Activated T-helper 1 cell treated with anti-CD3 and anti-CD28 coated beads, Interleukin-12 subunit alpha, Interleukin-12 subunit beta, Interleukin-2, Interleukin-4 antibody, amounts not matched to agents 30 ng/mL and 10 ng/mL and 1 ng/mL, durations not matched to agents 14 hours and 24 hours and 36 hours (primary cell): ENCODE measurements at regions of chr11 and their contacts with region 1.

Region 1: GRCh38 chr11:87421422-87421821 is 383.7 kb downstream of the TMEM135 start:
- DNase-seq: peak; percentile 2
- H3K4me3 Mint-ChIP-seq: no peak overlapping the region
- H3K27ac Mint-ChIP-seq: no peak overlapping the region
- H3K4me1 Mint-ChIP-seq: no peaks in the 10 kb centered on the region
- H3K27me3 Mint-ChIP-seq: peaks cover 5% of the 10 kb centered on the region

Region 2: GRCh38 chr11:86818466-86819192 is 602.8 kb before region 1 on chr11:
- intact Hi-C with region 1: no loop called
- DNase-seq: no peak
- H3K4me3 Mint-ChIP-seq: no peak overlapping the region
- H3K27ac Mint-ChIP-seq: no peak overlapping the region
- H3K4me1 Mint-ChIP-seq: peaks cover 31% of the 10 kb centered on the region
- H3K27me3 Mint-ChIP-seq: peaks cover 24% of the 10 kb centered on the region

Region 3: DNA sequence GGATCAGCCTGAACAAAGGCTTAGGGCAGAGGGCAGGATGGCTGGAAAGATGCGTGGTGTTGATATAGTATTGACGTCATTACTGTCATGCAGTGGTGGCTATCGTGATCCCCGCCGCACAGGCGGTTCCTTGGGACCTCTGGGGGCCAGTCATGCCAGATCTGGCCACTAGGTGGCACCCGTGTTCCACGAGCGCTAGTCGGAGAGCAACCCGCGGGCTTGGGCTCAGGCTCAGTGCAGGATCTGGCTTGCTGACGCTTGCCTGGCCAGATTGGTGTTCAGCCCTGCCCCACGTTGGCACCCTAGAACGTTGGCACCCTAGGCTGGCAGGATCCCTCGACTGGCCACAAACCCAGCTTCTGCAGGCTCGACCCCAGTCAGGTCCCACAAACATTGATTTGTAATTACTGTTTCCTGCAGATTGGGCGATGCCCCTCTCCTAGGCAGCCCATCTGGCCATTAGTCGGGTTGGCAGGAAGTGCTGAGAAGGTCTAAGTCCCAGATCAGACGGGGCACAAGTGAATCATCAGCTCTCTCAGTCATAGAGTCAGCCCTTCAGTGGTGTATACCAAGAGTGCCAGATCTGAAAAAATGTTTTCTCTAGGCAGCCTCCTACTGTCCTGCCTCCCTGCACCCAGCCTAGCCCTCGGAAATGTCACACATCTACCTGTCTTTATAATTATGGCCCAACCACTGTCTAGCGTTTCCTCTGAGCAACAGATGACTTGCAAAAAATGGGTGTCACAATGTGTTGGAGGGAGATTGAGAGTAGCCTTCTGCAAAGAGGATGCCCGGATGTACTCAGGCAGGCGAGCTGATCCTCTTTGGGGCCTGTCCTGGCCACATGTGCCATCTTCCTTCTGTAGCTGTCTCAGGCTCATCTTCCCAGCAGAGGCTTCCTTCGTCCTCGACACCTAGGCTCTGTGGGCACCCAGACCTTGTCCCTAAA is 68.4 kb before region 1 on chr11:
- intact Hi-C with region 1: loop called (anchors 1 kb)
- DNase-seq: peak; percentile 68
- H3K4me3 Mint-ChIP-seq: no peak overlapping the region
- H3K27ac Mint-ChIP-seq: no peak overlapping the region
- H3K4me1 Mint-ChIP-seq: peaks cover 14% of the 10 kb centered on the region
- H3K27me3 Mint-ChIP-seq: peaks cover 8% of the 10 kb centered on the region

Region 4: DNA sequence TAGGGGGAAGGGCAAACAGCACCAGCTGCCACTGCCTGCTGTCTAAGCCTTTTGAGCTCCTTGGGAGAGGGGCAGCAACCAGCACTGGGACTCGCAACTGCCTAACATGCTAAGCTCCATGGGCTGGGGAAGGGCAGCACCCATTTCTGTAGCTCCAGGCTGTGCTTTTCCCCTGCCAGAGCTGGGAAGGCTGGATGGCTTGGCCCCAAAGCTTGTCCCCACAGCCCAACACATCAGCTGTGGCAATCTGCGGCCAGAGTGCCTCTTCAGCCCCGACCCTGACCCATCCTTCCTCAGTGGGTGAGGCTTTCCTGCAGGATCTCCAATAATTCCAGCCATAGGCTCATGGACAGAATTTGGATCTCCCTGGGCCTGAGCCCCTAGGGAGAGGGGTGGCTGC is 167.7 kb after region 1 on chr11:
- intact Hi-C with region 1: no loop called
- DNase-seq: no peak
- H3K4me3 Mint-ChIP-seq: no peak overlapping the region
- H3K27ac Mint-ChIP-seq: no peak overlapping the region
- H3K4me1 Mint-ChIP-seq: no peaks in the 10 kb centered on the region
- H3K27me3 Mint-ChIP-seq: no peaks in the 10 kb centered on the region